Colonic mucosa (tissue), 4 donors: ENCODE measurements at regions of chr2 and their contacts with region 1.

Region 1: GRCh38 chr2:131673392-131674173 is 145.9 kb downstream of the CCDC74A start:
- DNase-seq: peak; percentile 87
- H3K4me3 ChIP-seq: peak overlapping the region; percentile 26
- H3K27ac ChIP-seq: no peak overlapping the region
- H3K4me1 ChIP-seq: peaks cover 10% of the 10 kb centered on the region
- H3K27me3 ChIP-seq: no peaks in the 10 kb centered on the region
- CTCF ChIP-seq: peak; percentile 84

Region 2: GRCh38 chr2:131413148-131413747 is 260.3 kb before region 1 on chr2:
- intact Hi-C with region 1: loop called (anchors 10 kb)
- DNase-seq: no peak
- H3K4me3 ChIP-seq: no peak overlapping the region
- H3K27ac ChIP-seq: no peak overlapping the region
- H3K4me1 ChIP-seq: no peaks in the 10 kb centered on the region
- H3K27me3 ChIP-seq: no peaks in the 10 kb centered on the region
- CTCF ChIP-seq: peak; percentile 71

Region 3: GRCh38 chr2:131492418-131493198 is 181.0 kb before region 1 on chr2:
- intact Hi-C with region 1: loop called (anchors 10 kb)
- DNase-seq: peak; percentile 93
- H3K4me3 ChIP-seq: peak overlapping the region; percentile 79
- H3K27ac ChIP-seq: peak overlapping the region; percentile 94
- H3K4me1 ChIP-seq: peaks cover 4% of the 10 kb centered on the region
- H3K27me3 ChIP-seq: no peaks in the 10 kb centered on the region
- CTCF ChIP-seq: peak; percentile 70

Region 4: DNA sequence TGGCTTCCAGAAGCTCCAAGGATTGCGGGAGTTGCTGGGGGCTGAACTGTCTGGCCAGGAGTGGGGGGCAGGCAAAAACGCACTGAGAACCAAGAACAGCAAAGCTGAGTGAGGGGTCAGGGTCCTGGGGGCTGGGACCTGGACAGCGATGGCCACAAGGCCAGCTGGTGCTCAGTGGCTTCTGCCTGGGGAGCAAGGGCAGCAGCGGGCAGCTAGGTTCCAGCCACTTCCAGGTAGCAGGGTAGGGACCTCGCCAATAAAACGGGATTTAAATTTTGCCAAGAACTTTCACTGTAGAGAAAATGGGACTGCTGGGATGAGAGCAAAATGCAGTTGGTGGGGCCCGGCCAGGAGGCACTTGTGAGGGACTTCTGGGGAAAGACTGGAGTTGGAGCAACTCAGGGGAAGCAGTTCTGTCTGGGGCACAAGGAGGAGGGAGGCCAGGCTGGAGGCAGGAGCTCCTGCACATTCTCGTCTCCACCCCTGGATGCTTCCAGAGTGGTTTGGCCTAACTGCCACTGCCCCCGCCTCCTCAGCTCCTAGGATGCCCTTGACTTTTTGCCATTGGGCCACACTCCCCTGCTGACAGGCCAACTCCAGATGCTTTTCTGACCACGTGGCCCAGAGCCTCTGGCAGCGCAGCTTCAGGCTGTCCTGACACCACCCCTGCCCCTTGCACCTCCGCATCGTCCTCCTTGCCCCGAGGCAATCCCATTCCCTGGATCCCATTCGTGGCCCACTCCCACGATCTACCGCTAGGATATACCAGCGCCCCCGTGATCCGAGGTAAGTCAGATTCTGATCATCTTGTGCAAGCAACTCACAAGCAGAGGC is 151.4 kb before region 1 on chr2:
- intact Hi-C with region 1: no loop called
- DNase-seq: no peak
- H3K4me3 ChIP-seq: no peak overlapping the region
- H3K27ac ChIP-seq: no peak overlapping the region
- H3K4me1 ChIP-seq: no peaks in the 10 kb centered on the region
- H3K27me3 ChIP-seq: no peaks in the 10 kb centered on the region
- CTCF ChIP-seq: no peak

Region 5: GRCh38 chr2:131801210-131801744 is 127.7 kb after region 1 on chr2:
- intact Hi-C with region 1: loop called (anchors 5 kb)
- DNase-seq: no peak
- H3K4me3 ChIP-seq: peak overlapping the region; percentile 15
- H3K27ac ChIP-seq: no peak overlapping the region
- H3K4me1 ChIP-seq: no peaks in the 10 kb centered on the region
- H3K27me3 ChIP-seq: no peaks in the 10 kb centered on the region
- CTCF ChIP-seq: no peak